ENCODE measurements at regions of chr9 and their contacts with region 1.

Region 1: GRCh38 chr9:126326228-126327005 is at the start of gene MVB12B:
- DNase-seq: peak; percentile 76
- ATAC-seq: peak; percentile 88
- H3K4me3 ChIP-seq: peak within 1 kb of the TSS in 4 of 5 experiments; percentile 37 to 56 (median 50)
- H3K4me3 Mint-ChIP-seq: peak within 1 kb of the TSS; percentile 86
- H3K27ac ChIP-seq: no peak within 1 kb of the TSS
- H3K27ac Mint-ChIP-seq: peak within 1 kb of the TSS; percentile 79
- H3K4me1 ChIP-seq: peaks cover 10 to 14% of the 10 kb centered on the region in 2 donors
- H3K4me1 Mint-ChIP-seq: peaks cover 18% of the 10 kb centered on the region
- H3K27me3 ChIP-seq: peaks cover 0 to 10% (median 0%) of the 10 kb centered on the region in 4 experiments
- H3K27me3 Mint-ChIP-seq: peaks cover 21% of the 10 kb centered on the region
- CTCF ChIP-seq: no peak
- total RNA-seq, gene MVB12B: 9.0 and 9.8 TPM in 2 replicates

Region 2: GRCh38 chr9:126564711-126565110 is 238.3 kb after region 1 on chr9:
- CTCF ChIA-PET with region 1: no interaction called
- POLR2A ChIA-PET with region 1: no interaction called
- intact Hi-C with region 1: loop called (anchors 10 kb)
- DNase-seq: no peak
- ATAC-seq: no peak
- H3K4me3 ChIP-seq: no peak overlapping the region
- H3K4me3 Mint-ChIP-seq: no peak overlapping the region
- H3K27ac ChIP-seq: no peak overlapping the region
- H3K27ac Mint-ChIP-seq: no peak overlapping the region
- H3K4me1 ChIP-seq: no peaks in the 10 kb centered on the region
- H3K4me1 Mint-ChIP-seq: no peaks in the 10 kb centered on the region
- H3K27me3 ChIP-seq: peaks cover 0 to 40% (median 9%) of the 10 kb centered on the region in 4 experiments
- H3K27me3 Mint-ChIP-seq: peaks cover 38% of the 10 kb centered on the region
- CTCF ChIP-seq: peak; percentile 14

Measured in B cell (primary cell).